ENCODE measurements at regions of chr1 and their contacts with region 1.

Region 1: GRCh38 chr1:116498789-116499628 is 71.8 kb downstream of the CD58 start:
- DNase-seq: peak; percentile 67
- H3K4me3 Mint-ChIP-seq: no peak overlapping the region
- H3K27ac Mint-ChIP-seq: no peak overlapping the region
- H3K4me1 Mint-ChIP-seq: peaks cover 52% of the 10 kb centered on the region
- H3K27me3 Mint-ChIP-seq: no peaks in the 10 kb centered on the region

Region 2: DNA sequence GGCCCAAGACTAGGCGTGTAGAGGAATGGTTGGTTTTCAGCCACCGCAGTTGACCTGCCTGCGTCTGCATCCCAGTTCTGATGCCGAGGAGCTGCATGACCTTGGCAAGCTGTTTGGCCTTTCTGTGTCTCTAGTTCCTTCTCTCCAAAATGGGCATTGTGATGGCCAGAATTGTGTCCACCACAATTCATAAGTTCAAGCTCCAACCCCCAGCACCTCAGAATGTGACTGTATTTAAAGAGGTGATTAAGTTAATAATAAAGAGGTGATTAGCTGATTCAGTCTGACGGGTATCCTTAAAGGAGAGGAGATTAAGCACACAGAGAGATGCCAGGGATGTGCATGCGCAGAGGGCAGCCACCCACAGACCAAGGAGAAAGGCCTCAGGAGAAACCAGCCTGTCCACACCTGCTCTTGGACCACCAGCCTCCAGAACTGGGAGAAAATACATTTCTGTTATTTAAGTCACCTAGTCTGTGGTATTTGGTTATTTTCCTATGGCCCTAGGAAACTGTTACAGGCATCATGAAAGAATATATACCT is 359.3 kb before region 1 on chr1:
- CTCF ChIA-PET with region 1: interaction called, 32 read pairs
- POLR2A ChIA-PET with region 1: interaction called, 3 read pairs
- DNase-seq: no peak
- H3K4me3 Mint-ChIP-seq: no peak overlapping the region
- H3K27ac Mint-ChIP-seq: no peak overlapping the region
- H3K4me1 Mint-ChIP-seq: peaks cover 6% of the 10 kb centered on the region
- H3K27me3 Mint-ChIP-seq: peaks cover 6% of the 10 kb centered on the region

Region 3: DNA sequence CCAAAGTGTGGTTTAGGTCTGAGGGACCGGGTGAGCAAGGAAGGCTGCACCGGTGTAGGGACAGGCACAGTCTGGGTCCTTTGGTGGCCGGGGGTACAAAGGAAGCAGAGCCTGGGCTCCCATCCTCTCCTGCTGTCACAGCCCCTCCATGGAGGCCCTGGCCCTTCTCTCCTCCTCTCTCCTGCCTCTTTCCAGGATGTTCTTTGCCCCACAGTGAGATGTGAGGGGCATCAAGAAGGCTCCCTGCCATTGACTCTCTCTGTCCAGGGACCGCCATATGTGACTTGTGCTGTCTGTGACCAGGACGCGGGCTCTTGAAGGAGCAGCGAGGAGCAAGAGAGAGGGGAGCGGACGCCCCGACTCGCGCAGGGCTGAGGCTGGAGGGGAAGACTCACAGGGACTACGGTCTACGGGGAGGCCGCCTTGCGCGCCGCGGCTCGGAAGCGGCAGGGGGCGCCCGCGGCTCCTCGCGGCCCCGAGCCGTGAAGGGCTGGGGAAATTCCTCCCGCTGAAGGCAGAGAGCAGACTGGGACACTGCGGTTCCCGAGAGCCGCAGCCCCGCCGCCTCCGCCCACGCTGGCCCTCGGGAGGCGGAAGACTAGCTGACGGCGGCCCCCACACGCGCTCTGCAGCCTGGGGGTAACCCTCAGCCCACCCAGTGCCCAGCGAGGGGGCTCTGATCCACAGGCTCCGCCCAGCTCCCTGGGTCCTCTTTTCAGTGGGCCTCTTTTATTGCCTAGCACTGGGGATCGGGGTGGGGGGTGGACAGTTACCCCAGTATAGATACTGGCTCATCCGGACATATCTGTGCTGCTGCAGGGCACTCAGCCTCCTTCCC is 347.1 kb before region 1 on chr1:
- CTCF ChIA-PET with region 1: interaction called, 18 read pairs
- POLR2A ChIA-PET with region 1: no interaction called
- DNase-seq: peak; percentile 69
- H3K4me3 Mint-ChIP-seq: peak overlapping the region; percentile 43
- H3K27ac Mint-ChIP-seq: peak overlapping the region; percentile 71
- H3K4me1 Mint-ChIP-seq: peaks cover 18% of the 10 kb centered on the region
- H3K27me3 Mint-ChIP-seq: peaks cover 19% of the 10 kb centered on the region

Region 4: DNA sequence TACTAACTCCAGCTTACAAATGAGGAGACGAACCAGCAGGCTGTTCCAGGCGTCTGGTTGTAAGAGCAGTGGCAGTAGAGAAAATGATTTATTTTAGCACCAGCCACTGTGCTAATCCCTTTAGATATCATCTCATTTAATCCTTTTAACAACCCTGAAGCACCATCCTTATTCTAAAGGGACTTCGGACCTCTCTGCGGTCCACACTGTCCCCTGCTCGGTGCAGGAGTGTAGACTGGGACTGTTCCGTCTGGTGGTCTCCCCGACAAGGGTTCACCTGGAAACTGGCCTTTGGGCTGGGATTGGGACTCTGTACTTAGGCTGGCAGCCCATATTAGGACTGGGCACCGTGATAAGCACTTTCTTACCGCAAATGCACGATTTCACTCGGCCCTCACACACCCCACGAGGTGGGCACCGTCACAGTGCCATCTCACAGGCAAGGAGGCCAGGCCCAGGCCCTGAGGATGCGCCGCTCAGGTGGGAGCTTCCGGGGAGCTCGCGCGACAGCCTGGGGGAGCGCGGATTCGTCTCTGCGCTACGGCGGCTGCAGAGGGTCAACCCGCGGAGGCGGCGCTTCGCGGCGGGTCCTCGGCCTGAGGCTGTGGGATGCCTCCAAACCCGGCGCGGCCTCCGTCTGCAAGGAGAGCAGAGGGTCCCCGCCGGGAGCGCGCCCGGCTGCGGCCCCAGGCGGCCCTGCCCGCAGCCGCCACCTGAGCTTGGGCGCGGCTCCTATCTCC is 80.7 kb before region 1 on chr1:
- CTCF ChIA-PET with region 1: interaction called, 12 read pairs
- POLR2A ChIA-PET with region 1: no interaction called
- DNase-seq: peak; percentile 87
- H3K4me3 Mint-ChIP-seq: peak overlapping the region; percentile 90
- H3K27ac Mint-ChIP-seq: peak overlapping the region; percentile 93
- H3K4me1 Mint-ChIP-seq: peaks cover 62% of the 10 kb centered on the region
- H3K27me3 Mint-ChIP-seq: peaks cover 10% of the 10 kb centered on the region

Region 5: GRCh38 chr1:116514708-116515525 is 15.9 kb after region 1 on chr1:
- CTCF ChIA-PET with region 1: interaction called, 14 read pairs
- POLR2A ChIA-PET with region 1: no interaction called
- DNase-seq: peak; percentile 71
- H3K4me3 Mint-ChIP-seq: peak overlapping the region; percentile 59
- H3K27ac Mint-ChIP-seq: peak overlapping the region; percentile 89
- H3K4me1 Mint-ChIP-seq: peaks cover 64% of the 10 kb centered on the region
- H3K27me3 Mint-ChIP-seq: no peaks in the 10 kb centered on the region